Posterior vena cava (tissue), 2 donors: ENCODE measurements at regions of chr6 and their contacts with region 1.

Region 1: GRCh38 chr6:144939921-144940320 is 654.8 kb downstream of the UTRN start:
- DNase-seq: no peak

Region 2: DNA sequence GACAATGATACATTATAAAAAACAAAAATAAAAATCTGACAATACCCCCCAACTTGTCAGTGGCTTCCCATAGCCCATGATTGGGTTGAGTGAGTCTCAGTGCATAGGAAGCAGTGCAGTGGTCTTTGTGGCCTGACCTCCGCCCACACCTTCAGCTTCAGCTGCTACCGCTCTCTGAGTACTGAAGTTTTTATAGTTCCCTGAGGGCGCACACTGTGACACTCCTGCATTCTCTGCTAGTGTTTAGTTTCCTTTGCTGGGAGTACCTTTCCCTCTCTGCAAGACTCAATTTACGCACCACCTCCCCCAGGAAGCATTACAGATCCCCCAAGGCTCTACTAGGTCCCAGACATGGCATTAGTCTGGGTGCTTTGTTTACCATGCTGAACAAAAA is 213.8 kb before region 1 on chr6:
- intact Hi-C with region 1: no loop called
- DNase-seq: no peak

Region 3: DNA sequence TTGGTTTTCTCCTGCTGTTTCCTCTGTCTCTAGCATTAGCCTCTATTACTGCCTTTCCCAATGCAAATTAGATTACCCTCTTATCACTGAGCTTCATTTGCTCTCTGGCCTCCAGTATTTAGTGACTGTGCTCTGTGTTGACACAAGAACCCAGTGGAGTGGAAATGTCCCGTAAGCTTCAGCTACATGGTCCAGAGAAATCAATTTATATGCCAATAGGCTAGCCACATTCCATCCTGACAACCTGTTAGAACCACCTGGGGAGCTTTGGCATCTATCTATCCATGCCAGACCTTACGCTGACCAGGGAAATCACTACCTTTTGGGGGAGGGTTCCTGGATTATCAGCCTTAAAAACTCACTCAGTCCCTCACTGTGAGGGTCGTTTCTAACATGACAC is 195.2 kb before region 1 on chr6:
- intact Hi-C with region 1: loop called in 1 of 2 experiments (anchors 5 kb)
- DNase-seq: no peak